ENCODE measurements at regions of chr1 and their contacts with region 1.

Region 1: DNA sequence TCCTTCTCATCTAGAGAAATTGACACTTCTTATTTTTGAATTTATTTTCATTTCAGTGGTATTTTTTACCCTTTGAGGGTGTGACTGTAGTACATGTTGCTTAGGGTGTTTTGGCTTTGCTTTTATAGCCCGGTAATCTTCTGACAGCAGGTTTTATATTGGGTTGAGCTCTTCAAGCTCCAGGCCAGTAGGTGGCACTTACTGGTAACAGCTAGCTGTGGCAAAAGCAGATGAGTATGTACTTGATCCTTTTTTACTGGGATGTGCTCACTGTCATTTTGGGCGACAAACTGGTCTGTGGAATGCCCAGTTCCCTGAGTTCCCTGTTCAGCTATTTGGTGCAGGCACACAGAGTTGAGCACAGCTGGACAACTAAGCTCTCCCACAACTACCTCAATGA is 916.2 kb upstream of the B3GALT2 start:
- DNase-seq: peak; percentile 61
- H3K4me3 ChIP-seq: no peak overlapping the region
- H3K27ac ChIP-seq: no peak overlapping the region
- H3K4me1 ChIP-seq: no peaks in the 10 kb centered on the region
- CTCF ChIP-seq: peak; percentile 75

Region 2: DNA sequence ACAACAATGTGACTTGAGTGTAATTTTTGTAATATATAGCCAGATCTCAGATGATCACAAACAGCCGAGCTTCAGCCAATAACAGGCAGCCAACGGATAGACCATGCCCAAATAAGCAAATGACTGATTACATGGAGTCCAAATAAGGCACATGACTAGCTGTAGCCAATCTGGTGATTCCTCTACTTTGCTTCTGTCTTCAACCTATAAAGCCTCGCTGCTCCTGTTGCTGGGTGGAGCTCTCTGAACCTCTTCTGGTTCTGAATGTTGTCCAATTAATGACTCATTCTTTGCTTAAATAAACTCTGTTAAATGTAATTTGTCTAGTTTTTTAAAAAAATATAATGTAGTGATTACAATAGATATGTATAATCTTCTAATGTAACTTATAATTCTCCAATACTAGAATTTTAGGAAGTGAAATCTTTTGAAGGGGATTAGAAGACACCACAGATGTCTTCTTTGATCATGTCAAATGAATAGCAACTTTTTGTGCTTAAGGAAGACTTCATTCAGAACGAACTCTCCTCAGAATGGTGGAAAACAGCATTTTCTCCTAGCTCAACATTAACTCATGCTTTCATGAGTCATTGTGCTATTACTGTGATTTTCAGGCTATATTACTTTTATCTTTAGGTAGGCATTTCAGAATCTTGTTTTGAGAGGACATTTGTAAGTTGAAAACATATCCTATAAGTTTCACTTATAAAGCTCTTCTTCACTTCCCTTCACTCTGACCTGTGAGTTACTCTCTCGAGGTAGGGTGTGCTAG is 58.4 kb before region 1 on chr1:
- CTCF ChIA-PET with region 1: no interaction called
- POLR2A ChIA-PET with region 1: no interaction called
- intact Hi-C with region 1: no loop called
- DNase-seq: no peak
- H3K4me3 ChIP-seq: no peak overlapping the region
- H3K27ac ChIP-seq: no peak overlapping the region
- H3K4me1 ChIP-seq: peaks cover 6% of the 10 kb centered on the region
- CTCF ChIP-seq: no peak; the same call in 1 of the 2 replicates

Region 3: DNA sequence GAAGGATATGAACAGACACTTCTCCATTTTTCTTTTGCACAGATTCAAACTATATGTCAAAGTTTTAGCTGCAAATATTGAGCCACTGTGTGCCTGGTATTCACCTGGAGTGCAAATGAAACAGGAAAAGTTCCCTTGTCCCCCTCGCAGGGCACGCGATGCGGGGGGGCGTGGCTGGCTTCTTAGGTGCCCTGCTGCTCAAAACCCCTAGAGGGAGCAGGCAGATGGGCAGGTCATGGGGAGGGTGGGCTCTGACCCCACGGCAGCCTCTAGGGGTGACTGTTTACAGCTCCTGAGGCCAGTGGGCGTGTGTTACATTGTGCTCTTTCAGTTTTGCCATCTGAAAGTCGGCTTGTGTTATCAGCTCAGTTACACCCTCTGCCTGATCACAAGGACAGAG is 15.0 kb after region 1 on chr1:
- CTCF ChIA-PET with region 1: no interaction called
- POLR2A ChIA-PET with region 1: interaction called, 8 read pairs
- intact Hi-C with region 1: loop called (anchors 1 kb)
- DNase-seq: peak; percentile 12
- H3K4me3 ChIP-seq: no peak overlapping the region
- H3K27ac ChIP-seq: no peak overlapping the region
- H3K4me1 ChIP-seq: peaks cover 5% of the 10 kb centered on the region
- CTCF ChIP-seq: peak; percentile 26; the same call in 1 of the 2 replicates

Measured in OCI-LY7 (cell line).